Posterior cingulate gyrus (tissue), 11 donors: ENCODE measurements at regions of chr11 and their contacts with region 1.

Region 1: DNA sequence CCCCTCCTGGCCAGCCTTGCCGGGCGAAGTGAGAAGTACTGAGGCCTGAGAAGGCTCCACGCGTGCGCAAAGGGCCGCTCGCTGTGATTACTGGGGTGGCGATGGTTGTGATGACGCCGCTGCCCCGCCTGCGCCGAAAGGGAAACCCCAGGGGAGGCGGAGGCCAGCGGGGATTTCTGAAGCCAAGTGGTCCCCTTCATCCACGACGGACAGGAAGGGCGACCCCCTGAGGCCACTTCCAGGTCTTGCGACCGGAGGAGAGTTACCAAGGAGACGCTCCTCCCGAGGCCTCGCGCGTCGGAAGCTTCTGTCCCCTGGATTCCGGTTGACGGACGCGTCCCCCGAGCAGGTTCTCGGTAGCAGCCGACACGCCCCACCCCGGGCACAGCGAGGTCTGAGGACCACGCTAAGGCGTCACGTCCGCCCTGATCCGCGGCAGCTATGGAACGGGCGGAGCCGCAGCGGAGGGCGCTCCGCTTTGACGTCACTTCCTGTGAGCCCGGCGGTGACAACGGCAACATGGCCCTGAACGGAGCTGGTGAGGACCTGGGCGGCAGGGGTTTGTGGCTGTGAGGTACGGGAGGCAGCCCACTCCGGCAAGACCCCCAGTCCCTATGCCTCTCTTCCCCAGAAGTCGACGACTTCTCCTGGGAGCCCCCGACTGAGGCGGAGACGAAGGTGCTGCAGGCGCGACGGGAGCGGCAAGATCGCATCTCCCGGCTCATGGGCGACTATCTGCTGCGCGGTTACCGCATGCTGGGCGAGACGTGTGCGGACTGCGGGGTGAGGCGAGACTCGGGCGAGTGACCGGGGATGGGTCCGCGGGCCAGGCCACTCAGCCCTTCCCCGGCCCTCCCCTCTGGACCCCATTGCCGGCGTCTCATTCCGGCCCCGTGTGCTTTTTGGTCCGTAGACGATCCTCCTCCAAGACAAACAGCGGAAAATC is at the start of gene ZNRD2:
- DNase-seq: peak; percentile 98 to 100 (median 99)

Region 2: GRCh38 chr11:65477149-65477965 is 92.9 kb before region 1 on chr11:
- intact Hi-C with region 1: no loop called
- DNase-seq: peak; percentile 93 to 99 (median 96)

Region 3: DNA sequence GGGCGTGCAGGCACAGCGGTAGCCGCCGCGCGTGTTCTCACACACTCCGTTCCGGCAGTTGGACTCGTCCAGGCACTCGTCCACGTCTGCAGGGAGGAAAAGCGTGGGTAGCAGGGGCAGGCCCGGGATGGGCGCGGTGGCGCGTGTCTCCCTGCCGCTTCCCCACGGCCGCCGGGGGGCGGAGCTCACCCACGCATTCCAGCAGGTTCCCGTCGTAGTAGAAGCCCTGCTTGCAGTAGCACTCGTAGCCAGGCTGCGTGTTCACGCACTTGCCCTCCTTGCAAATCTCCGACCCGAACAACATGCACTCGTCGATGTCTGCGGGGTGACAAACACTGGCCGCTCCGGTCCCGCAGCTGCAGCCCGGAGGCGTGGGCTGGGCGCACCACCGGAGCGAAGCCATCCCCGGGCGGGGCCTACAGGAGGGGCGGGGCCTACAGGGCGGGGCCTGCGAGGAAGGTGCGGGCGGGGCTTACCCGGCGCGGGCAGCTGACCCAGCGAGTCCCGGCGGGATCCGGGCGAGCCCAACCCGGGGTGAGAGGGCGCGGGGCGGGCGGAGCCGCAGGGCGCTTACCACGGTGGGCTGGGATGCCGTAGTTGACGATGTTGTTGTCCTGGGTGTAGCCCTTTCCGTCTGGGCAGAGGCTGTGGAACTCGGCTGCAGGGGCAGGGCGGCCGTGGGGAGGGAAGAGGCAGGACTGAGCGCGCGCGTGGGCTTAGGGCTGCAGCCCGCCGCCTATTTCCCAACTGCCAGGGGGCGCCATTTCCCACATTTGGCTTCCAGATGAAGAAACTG is 29.8 kb before region 1 on chr11:
- intact Hi-C with region 1: loop called (anchors 1 kb)
- DNase-seq: peak; percentile 82 to 99 (median 90)

Region 4: GRCh38 chr11:65558002-65558931 is 12.0 kb before region 1 on chr11 and contains the start of gene LTBP3:
- intact Hi-C with region 1: loop called (anchors 1 kb)
- DNase-seq: peak; percentile 73 to 97 (median 82)

Region 5: GRCh38 chr11:65593518-65594298 is 23.5 kb after region 1 on chr11:
- intact Hi-C with region 1: loop called (anchors 2 kb)
- DNase-seq: peak in 8 of 10 donors; percentile 69 to 95 (median 75)

Region 6: DNA sequence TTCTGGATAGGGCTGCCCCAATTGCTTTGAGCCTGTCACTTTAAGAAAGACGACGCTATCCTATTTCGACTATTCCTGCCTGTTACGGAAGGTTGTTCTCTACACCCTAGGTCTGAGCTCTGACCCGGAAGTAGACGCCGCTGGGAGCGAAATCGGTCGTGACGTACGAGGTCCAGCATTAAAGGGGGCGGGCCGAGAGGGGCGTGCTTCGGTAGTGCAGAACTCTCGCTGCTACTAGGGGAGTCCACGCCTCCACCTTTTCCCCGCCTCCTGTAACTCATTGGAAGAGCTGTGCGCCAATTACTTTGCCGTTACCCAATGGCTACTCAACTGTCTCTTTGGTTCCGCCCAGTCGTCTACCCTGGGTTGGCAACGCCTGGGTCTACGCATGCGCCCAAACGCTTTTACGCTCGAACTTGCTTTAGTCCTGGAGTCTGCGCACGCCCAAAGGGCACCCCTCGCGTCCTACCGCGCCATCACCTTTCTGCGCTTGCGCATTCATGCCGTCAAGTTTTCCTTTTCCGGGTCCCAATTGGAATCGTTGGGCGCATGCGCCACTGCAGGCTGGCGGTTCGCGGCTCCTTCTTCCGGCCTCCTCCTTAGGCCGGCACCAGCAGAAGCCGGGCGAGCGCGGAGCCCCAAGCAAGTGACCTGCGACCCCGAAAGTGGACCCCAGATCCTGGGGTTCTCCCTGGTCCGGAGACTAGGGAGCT is 45.1 kb after region 1 on chr11 and contains the start of gene PCNX3:
- intact Hi-C with region 1: loop called (anchors 2 kb)
- DNase-seq: peak; percentile 100